Activated naive CD4-positive, alpha-beta T cell treated with anti-CD3 and anti-CD28 coated beads for 36 hours (primary cell): ENCODE measurements at regions of chr12 and their contacts with region 1.

Region 1: GRCh38 chr12:93569656-93570551 is 2.6 kb upstream of the SOCS2 start:
- DNase-seq: peak; percentile 88
- H3K4me3 Mint-ChIP-seq: peak overlapping the region; percentile 83
- H3K27ac Mint-ChIP-seq: peak overlapping the region; percentile 81
- H3K4me1 Mint-ChIP-seq: peaks cover 15% of the 10 kb centered on the region
- H3K27me3 Mint-ChIP-seq: peaks cover 17% of the 10 kb centered on the region

Region 2: DNA sequence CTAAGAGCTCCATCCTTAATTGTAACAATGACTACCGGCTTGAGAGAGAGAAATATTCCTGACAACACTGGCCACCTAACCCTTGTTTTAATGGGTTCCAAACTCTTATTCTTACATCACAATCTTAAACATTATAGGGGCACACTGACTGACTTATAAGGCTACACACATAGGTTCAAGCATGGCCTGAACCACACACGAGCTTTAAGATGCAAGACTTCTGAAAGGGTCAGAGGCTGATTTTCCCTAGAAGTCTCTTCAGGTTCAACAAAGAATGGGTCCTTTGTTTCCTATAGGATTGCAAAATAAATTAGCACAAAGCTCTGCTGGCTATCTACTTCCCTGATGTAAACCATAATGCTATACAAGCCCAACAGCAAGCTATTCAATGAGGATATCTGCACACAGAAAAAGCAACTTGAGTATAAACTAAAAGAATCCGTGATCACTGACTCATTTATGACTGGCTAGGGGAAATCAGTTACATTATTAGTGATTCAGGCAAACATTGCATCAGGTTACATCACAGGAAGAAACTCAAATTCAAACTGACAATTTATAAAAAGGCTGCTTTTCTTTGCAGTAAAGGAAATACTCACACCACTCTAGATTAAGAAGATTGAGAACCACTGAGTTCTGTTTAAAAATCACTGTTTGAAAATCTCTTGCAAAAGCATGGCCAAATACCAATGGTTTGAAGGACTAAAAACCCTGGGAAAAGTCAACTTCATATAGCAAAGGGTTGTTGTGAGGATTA is 1432.8 kb before region 1 on chr12:
- CTCF ChIA-PET with region 1: no interaction called
- intact Hi-C with region 1: loop called (anchors 5 kb)
- DNase-seq: no peak
- H3K4me3 Mint-ChIP-seq: peak overlapping the region; percentile 100
- H3K27ac Mint-ChIP-seq: peak overlapping the region; percentile 99
- H3K4me1 Mint-ChIP-seq: peaks cover 58% of the 10 kb centered on the region
- H3K27me3 Mint-ChIP-seq: no peaks in the 10 kb centered on the region

Region 3: DNA sequence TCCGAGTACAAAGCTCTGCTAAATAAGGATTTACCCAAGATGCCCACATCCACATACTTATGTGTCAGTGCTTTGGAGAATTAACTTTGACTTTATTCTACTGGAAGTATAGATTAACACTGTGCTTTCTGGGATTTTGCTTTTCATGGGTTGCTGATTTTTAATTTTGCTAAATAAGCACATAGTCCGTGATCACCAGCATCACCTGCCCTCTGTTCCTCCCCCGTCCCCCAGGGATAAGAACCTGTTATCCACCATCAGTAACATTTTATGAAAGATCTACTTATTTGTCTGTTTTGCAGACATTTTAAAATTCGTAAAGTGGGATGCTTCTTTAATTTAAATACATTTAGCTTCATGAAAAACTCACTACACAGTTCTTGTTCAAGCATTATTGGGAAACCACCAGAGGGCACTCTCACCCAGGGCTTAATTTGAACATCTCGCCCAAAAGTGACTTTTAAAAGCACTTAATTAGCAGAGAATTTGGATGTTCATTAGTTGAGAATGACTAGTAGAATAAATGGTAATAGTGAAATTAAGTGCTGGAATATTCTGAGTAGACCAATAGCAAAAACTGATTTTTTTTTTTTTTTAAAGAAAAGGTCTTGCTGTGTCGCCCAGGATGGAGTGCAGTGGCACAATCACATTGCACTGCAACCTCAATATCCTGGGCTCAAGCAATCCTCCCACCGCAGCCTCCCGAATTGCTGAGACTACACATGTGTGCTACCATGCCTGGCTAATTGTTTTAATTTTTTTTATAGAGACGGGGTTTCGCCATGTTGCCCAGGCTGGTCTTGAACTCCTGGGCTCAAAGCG is 66.9 kb before region 1 on chr12:
- CTCF ChIA-PET with region 1: interaction called, 11 read pairs
- intact Hi-C with region 1: loop called (anchors 2 kb)
- DNase-seq: peak; percentile 75
- H3K4me3 Mint-ChIP-seq: no peak overlapping the region
- H3K27ac Mint-ChIP-seq: no peak overlapping the region
- H3K4me1 Mint-ChIP-seq: peaks cover 17% of the 10 kb centered on the region
- H3K27me3 Mint-ChIP-seq: no peaks in the 10 kb centered on the region

Region 4: DNA sequence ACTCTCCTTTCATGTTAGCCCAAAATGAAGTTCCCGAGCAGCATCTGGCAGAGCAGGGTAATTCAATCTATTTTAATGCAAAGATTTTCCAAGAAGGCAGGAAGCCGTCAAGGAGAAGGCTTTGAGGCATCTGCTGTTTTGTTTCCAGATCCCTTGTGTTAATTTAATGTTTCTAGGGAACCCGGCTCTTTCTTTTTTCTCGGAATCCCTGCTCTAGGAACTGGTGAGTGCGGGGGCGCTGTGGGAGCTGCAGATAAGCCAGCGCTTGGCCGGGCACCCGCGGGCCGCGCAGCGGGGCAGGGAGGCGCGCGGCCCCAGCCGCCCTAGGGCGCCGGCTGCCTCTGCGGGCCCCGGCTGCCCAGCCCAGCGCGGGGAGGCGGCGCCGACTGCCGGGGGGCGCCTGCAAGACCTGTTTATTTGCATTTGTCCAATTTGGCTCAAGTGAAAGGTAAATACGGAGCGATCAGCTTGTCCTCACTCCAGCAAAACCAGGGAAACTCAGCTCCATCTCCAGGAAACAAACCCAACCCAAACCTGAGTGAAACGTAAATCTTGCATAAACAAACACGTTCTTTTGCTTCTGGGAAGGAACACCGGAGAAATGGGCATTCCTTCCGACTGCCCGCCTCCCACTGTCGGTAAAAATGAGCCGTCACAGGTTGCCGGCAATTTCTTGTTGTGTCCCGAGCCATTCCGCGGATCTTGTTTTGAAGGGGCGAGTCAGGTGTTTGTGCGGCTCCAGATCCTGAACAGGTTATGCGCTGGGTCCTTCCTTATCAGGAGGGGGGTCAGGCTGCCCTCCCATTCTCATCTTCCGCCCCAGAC is 172.4 kb after region 1 on chr12:
- CTCF ChIA-PET with region 1: interaction called, 6 read pairs
- intact Hi-C with region 1: loop called (anchors 1 kb)
- DNase-seq: peak; percentile 60
- H3K4me3 Mint-ChIP-seq: peak overlapping the region; percentile 76
- H3K27ac Mint-ChIP-seq: peak overlapping the region; percentile 75
- H3K4me1 Mint-ChIP-seq: peaks cover 46% of the 10 kb centered on the region
- H3K27me3 Mint-ChIP-seq: no peaks in the 10 kb centered on the region

Region 5: DNA sequence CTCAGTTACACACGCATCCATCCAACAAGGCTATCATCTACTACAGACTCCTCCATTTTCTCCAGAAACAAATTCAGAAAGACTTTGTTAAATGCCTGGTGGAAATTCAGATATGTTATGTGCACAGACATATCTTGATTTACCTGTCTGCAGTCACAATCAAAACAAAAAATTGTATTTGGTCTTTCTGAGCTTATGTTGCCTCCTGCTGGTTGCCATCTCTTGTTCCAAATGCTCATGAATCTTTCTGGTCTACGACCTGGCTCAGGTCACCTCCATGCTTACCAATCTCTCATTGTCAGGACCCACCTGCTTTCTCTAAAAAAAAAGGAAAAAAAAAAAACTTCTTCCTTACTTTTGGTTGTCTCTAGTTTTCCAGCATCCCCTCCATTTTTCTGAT is 409.3 kb after region 1 on chr12:
- CTCF ChIA-PET with region 1: interaction called, 11 read pairs
- intact Hi-C with region 1: loop called (anchors 1 kb)
- DNase-seq: peak; percentile 53
- H3K4me3 Mint-ChIP-seq: no peak overlapping the region
- H3K27ac Mint-ChIP-seq: no peak overlapping the region
- H3K4me1 Mint-ChIP-seq: peaks cover 27% of the 10 kb centered on the region
- H3K27me3 Mint-ChIP-seq: no peaks in the 10 kb centered on the region